MCF 10A (cell line): ENCODE measurements at regions of chr1 and their contacts with region 1.

Region 1: DNA sequence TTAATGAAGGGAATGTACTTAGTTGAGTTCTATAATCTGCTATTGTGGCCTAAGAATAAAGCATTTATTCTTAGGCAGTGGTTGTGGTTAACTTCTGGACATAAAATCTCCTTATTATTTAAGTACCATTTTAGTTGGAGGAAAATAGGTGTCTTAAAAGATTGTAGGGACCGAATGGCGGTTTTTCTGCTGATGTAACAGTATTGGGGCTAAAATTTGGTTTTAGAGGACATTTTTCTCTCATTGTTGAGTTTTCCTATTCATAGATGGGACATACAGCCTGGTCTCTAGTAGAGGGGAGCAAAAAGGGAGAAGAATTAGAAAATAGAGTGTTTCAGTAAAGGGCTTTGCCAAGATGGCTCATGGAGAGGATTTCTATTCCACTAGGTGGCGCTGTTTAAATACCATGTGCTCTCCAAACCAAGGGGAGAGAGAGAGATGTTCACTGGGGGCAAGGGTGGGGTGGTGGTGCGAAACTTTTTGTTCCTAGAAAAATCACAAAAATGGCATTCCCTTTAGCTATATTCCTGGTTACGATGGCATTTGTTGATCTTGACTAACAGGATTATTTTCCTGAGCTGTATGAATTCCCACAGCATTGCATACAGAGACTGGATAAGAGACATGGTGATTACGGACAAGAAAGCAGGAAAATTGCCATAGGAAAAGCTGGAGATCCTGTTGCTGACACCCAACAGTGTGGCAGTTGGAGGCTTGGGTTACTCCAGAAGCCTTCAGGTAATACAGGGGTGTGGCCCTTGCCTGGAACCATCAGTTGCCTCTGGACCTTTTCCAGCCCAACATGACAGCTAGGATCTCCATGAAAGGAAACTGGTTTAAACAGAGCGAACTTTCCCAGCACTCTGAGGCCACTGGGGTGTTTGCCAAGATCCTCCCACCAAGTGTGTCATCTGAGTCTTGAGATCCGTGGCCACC is 18.2 kb upstream of the FCGR2A start:
- DNase-seq: peak; percentile 98
- H3K4me3 Mint-ChIP-seq: peak overlapping the region; percentile 41
- H3K27ac Mint-ChIP-seq: no peak overlapping the region
- H3K4me1 Mint-ChIP-seq: no peaks in the 10 kb centered on the region
- H3K27me3 Mint-ChIP-seq: peaks cover 39% of the 10 kb centered on the region
- CTCF ChIP-seq: peak; percentile 87

Region 2: DNA sequence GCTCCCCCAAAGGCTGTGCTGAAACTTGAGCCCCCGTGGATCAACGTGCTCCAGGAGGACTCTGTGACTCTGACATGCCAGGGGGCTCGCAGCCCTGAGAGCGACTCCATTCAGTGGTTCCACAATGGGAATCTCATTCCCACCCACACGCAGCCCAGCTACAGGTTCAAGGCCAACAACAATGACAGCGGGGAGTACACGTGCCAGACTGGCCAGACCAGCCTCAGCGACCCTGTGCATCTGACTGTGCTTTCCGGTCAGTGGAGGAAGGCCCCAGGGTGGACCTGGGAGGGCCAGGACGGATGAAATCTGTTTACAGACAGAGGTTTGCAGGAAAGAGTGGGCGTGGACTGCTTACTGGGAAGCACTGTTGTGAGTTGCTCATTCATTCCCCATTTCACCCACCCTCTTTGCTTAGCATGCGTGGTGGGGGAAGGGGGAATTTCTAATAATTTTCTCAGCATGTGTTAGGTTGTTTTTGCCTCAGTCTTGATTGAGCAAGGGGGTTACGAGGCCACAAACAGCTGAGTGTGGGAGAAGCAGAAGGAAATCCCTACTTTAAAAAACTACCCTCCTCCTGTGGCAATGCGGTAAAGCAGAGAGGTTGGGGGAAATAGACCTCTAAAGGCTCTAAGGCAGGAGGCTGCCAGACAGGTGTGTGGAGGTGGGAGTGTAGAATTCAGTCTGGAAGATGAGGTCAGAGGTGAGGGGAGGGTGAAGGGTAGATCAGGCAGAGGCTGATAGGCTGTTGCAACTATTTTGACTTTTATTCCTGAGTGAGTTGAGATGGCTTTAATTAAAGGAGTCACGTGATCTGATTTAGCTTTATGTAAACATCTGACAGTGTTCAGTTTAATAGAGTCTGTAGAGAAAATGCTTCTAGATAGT is 19.5 kb after region 1 on chr1:
- CTCF ChIA-PET with region 1: interaction called, 21 read pairs
- POLR2A ChIA-PET with region 1: no interaction called
- intact Hi-C with region 1: no loop called
- DNase-seq: peak; percentile 56
- H3K4me3 Mint-ChIP-seq: no peak overlapping the region
- H3K27ac Mint-ChIP-seq: no peak overlapping the region
- H3K4me1 Mint-ChIP-seq: no peaks in the 10 kb centered on the region
- H3K27me3 Mint-ChIP-seq: no peaks in the 10 kb centered on the region
- CTCF ChIP-seq: no peak

Region 3: DNA sequence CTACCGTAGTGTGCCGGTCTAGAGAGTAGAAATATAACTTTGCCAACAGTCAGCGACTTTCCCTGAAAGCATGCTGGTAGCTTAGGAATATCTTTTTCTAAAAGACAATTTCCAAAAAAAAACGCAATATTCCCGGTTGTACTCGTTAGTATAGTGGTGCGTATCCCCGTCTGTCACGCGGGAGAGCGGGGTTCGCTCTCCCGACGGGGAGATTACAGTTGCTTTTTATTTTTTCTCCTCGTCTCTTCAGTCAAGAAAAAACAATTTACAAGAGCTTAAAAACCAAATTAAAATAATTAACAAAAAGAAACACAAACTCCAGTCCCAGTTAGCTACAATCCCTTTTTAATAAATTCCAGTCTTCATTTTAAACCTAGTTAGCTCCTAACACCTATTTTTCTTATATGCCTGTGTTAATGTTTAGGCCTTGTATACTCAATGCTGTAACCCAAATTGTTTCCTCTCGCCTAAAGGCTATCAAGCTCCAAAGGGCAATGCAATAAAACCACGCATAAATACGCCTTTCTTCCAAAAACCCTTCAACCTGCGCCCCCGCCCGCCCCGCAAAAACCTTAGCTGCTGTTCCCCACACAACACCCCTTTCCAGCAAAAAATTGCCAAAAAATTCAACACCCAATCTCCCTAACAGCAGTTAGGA is 45.0 kb after region 1 on chr1:
- CTCF ChIA-PET with region 1: interaction called, 4 read pairs
- POLR2A ChIA-PET with region 1: no interaction called
- intact Hi-C with region 1: loop called (anchors 2 kb)
- DNase-seq: no peak
- H3K4me3 Mint-ChIP-seq: peak overlapping the region; percentile 88
- H3K27ac Mint-ChIP-seq: no peak overlapping the region
- H3K4me1 Mint-ChIP-seq: no peaks in the 10 kb centered on the region
- H3K27me3 Mint-ChIP-seq: no peaks in the 10 kb centered on the region
- CTCF ChIP-seq: no peak